K562 (cell line): ENCODE measurements at regions of chr10 and their contacts with region 1.

Region 1: DNA sequence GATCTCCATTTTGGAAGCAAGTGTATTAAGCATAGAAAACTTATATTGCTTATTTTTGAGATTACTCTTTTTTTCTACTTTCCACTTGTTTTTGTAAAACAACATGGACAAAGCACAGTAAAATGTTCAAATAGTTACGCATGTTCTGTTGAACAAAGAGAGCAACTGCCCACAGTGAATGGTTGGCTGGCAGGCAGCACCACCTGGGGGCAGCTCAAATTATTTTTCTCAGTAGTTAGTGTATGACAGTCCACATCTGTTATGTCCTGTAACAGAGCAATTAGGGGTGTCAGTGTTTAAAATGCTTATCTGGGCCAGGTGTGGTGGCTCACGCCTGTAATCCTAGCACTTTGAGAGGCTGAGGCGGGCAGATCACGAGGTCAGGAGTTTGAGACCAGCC is 46.1 kb upstream of the CACUL1 start:
- DNase-seq: peak in 3 of 4 experiments; percentile 16 to 21 (median 18)
- ATAC-seq: peak; percentile 72
- H3K4me3 ChIP-seq: no peak overlapping the region
- H3K27ac ChIP-seq: no peak overlapping the region
- H3K4me1 ChIP-seq: no peaks in the 10 kb centered on the region; a peak in 1 of 5 replicates
- H3K27me3 ChIP-seq: peaks cover 2 to 11% of the 10 kb centered on the region in 2 experiments; a peak in 4 of 5 replicates
- CTCF ChIP-seq: peak; percentile 46 to 72 (median 48); a peak in 5 of 6 replicates
- EP300 ChIP-seq: no peak
- POLR2A ChIP-seq: no peak
- RAD21 ChIP-seq: peak; percentile 80 to 82

Region 2: DNA sequence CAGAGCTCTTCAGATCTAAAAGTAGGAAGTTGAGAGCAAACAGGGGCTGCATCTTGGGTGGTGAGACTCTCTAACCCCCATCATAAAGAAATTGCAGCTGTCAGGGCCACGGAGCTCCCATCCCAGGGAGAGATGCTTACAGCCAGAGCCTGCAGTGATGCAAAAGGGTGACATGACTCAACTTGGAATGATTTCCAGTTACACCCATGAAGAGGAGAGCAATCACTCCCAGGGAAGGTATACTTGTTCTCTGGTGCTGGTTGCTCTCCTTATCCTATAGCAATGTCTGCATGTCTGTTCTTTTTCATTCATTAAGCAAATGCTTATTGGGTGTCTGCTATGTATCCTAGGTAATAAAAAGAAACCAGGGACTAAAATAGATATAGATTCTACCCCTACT is 982.2 kb before region 1 on chr10:
- CTCF ChIA-PET with region 1: no interaction called
- POLR2A ChIA-PET with region 1: no interaction called
- in situ Hi-C with region 1: no loop called
- intact Hi-C with region 1: no loop called
- DNase-seq: no peak
- ATAC-seq: no peak
- H3K4me3 ChIP-seq: no peak overlapping the region
- H3K27ac ChIP-seq: no peak overlapping the region
- H3K4me1 ChIP-seq: no peaks in the 10 kb centered on the region
- H3K27me3 ChIP-seq: 0 out of 5 replicates have a peak, but pooled peaks cover 0 to 2% of the 10 kb centered on the region in 2 experiments
- CTCF ChIP-seq: no peak
- EP300 ChIP-seq: no peak
- POLR2A ChIP-seq: no peak
- RAD21 ChIP-seq: no peak

Region 3: GRCh38 chr10:118720685-118721538 is 80.0 kb before region 1 on chr10:
- CTCF ChIA-PET with region 1: interaction called, 5 read pairs
- POLR2A ChIA-PET with region 1: no interaction called
- in situ Hi-C with region 1: no loop called
- intact Hi-C with region 1: loop called (anchors 5 kb)
- DNase-seq: peak; percentile 14 to 57 (median 30)
- ATAC-seq: peak; percentile 59; the same call in 1 of the 3 replicates
- H3K4me3 ChIP-seq: no peak overlapping the region
- H3K27ac ChIP-seq: no peak overlapping the region
- H3K4me1 ChIP-seq: no peaks in the 10 kb centered on the region
- H3K27me3 ChIP-seq: no peaks in the 10 kb centered on the region
- CTCF ChIP-seq: peak; percentile 38 to 75 (median 41); a peak in 4 of 6 replicates
- EP300 ChIP-seq: no peak
- POLR2A ChIP-seq: no peak
- RAD21 ChIP-seq: peak; percentile 57 to 63

Region 4: GRCh38 chr10:118768071-118768919 is 32.6 kb before region 1 on chr10:
- CTCF ChIA-PET with region 1: no interaction called
- POLR2A ChIA-PET with region 1: interaction called, 3 read pairs
- in situ Hi-C with region 1: no loop called
- intact Hi-C with region 1: loop called (anchors 5 kb)
- DNase-seq: peak in 1 of 4 experiments; percentile 28
- ATAC-seq: peak; percentile 71
- H3K4me3 ChIP-seq: no peak overlapping the region
- H3K27ac ChIP-seq: peak overlapping the region; percentile 84; the same call in 2 of the 3 replicates
- H3K4me1 ChIP-seq: peaks cover 0 to 18% of the 10 kb centered on the region in 2 experiments; a peak in 4 of 5 replicates
- H3K27me3 ChIP-seq: no peaks in the 10 kb centered on the region
- CTCF ChIP-seq: no peak
- EP300 ChIP-seq: no peak
- POLR2A ChIP-seq: no peak
- RAD21 ChIP-seq: no peak